ENCODE measurements at regions of chr17 and their contacts with region 1.

Region 1: GRCh38 chr17:75109407-75110233 is at the start of gene ARMC7:
- DNase-seq: peak; percentile 94
- H3K4me3 Mint-ChIP-seq: peak within 1 kb of the TSS; percentile 93
- H3K27ac Mint-ChIP-seq: peak within 1 kb of the TSS; percentile 80
- H3K4me1 Mint-ChIP-seq: peaks cover 49% of the 10 kb centered on the region
- H3K27me3 Mint-ChIP-seq: peaks cover 12% of the 10 kb centered on the region

Region 2: GRCh38 chr17:74968361-74968853 is 141.2 kb before region 1 on chr17:
- CTCF ChIA-PET with region 1: no interaction called
- DNase-seq: no peak
- H3K4me3 Mint-ChIP-seq: no peak overlapping the region
- H3K27ac Mint-ChIP-seq: no peak overlapping the region
- H3K4me1 Mint-ChIP-seq: peaks cover 6% of the 10 kb centered on the region
- H3K27me3 Mint-ChIP-seq: peaks cover 45% of the 10 kb centered on the region

Region 3: GRCh38 chr17:75046582-75047289 is 62.9 kb before region 1 on chr17 and contains the starts of genes ATP5PD and KCTD2:
- CTCF ChIA-PET with region 1: interaction called, 12 read pairs
- DNase-seq: peak; percentile 97
- H3K4me3 Mint-ChIP-seq: peak within 1 kb of the TSS; percentile 97
- H3K27ac Mint-ChIP-seq: peak within 1 kb of the TSS; percentile 96
- H3K4me1 Mint-ChIP-seq: peaks cover 49% of the 10 kb centered on the region
- H3K27me3 Mint-ChIP-seq: peaks cover 3% of the 10 kb centered on the region

Region 4: DNA sequence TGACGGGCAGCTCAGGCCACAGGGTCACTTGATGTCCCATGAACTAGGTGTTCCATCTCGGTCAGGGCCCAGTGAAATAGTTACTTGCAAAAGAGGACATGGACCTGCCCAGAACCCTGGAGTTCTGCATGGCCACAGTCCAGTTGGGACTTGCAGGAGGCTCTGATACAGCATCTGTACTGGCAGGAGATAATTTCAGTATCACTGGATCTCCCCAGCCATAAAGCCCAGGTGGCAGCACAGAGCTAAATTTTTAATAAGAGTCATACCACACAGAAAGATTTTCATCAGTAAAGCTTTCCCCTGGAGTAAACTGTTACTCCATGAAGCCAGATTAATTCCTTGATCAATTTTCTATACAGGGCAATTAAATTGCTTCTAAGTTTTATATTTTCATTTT is 39.8 kb before region 1 on chr17:
- CTCF ChIA-PET with region 1: interaction called, 12 read pairs
- DNase-seq: peak; percentile 49
- H3K4me3 Mint-ChIP-seq: no peak overlapping the region
- H3K27ac Mint-ChIP-seq: no peak overlapping the region
- H3K4me1 Mint-ChIP-seq: peaks cover 42% of the 10 kb centered on the region
- H3K27me3 Mint-ChIP-seq: peaks cover 4% of the 10 kb centered on the region

Region 5: GRCh38 chr17:75131280-75132017 is 21.8 kb after region 1 on chr17 and contains the start of gene NT5C:
- CTCF ChIA-PET with region 1: interaction called, 164 read pairs
- DNase-seq: peak; percentile 81
- H3K4me3 Mint-ChIP-seq: peak within 1 kb of the TSS; percentile 88
- H3K27ac Mint-ChIP-seq: peak within 1 kb of the TSS; percentile 92
- H3K4me1 Mint-ChIP-seq: peaks cover 29% of the 10 kb centered on the region
- H3K27me3 Mint-ChIP-seq: no peaks in the 10 kb centered on the region

Region 6: DNA sequence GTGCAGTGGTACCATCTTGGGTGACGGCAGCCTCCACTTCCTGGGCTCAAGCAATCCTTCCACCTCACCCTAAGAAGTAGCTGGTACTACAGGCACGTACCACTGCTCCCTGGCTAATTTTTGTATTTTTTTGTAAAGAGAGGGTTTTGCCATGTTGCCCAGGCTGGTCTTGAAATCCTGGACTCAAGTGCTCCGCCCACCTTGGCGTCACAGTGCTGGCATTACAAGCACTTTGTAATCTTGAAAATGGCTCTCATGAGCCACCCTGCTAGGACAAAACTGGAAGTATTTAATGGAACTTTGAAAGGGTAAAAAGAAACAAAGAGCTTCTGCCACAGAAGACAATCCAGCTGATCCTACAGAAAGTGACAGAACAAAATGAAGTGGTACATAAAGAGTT is 63.9 kb after region 1 on chr17:
- CTCF ChIA-PET with region 1: interaction called, 116 read pairs
- DNase-seq: no peak
- H3K4me3 Mint-ChIP-seq: no peak overlapping the region
- H3K27ac Mint-ChIP-seq: no peak overlapping the region
- H3K4me1 Mint-ChIP-seq: peaks cover 18% of the 10 kb centered on the region
- H3K27me3 Mint-ChIP-seq: no peaks in the 10 kb centered on the region

Region 7: DNA sequence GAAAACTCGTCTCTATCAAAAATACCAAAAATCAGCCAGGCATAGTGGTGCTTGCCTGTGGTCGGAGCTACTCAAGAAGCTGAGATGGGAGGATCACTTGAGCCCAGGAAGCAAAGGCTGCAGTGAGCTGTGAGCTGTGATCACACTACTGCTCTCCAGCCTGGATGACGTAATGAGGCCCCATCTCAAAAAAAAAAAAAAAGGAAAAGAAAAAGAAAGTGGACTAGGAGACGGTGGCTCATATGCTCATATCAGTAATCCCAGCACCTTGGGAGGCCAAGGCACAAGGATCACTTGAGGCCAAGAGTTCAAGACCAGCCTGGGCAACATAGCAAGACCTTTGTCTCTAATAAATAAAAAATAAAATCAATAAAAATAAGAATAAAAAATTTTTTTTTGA is 82.0 kb after region 1 on chr17:
- CTCF ChIA-PET with region 1: interaction called, 15 read pairs
- DNase-seq: no peak
- H3K4me3 Mint-ChIP-seq: no peak overlapping the region
- H3K27ac Mint-ChIP-seq: no peak overlapping the region
- H3K4me1 Mint-ChIP-seq: peaks cover 18% of the 10 kb centered on the region
- H3K27me3 Mint-ChIP-seq: no peaks in the 10 kb centered on the region

Region 8: GRCh38 chr17:75238684-75239191 is 129.1 kb after region 1 on chr17:
- CTCF ChIA-PET with region 1: interaction called, 23 read pairs
- DNase-seq: peak; percentile 72
- H3K4me3 Mint-ChIP-seq: peak overlapping the region; percentile 46
- H3K27ac Mint-ChIP-seq: peak overlapping the region; percentile 47
- H3K4me1 Mint-ChIP-seq: peaks cover 19% of the 10 kb centered on the region
- H3K27me3 Mint-ChIP-seq: no peaks in the 10 kb centered on the region